ENCODE measurements at regions of chr6 and their contacts with region 1.

Region 1: DNA sequence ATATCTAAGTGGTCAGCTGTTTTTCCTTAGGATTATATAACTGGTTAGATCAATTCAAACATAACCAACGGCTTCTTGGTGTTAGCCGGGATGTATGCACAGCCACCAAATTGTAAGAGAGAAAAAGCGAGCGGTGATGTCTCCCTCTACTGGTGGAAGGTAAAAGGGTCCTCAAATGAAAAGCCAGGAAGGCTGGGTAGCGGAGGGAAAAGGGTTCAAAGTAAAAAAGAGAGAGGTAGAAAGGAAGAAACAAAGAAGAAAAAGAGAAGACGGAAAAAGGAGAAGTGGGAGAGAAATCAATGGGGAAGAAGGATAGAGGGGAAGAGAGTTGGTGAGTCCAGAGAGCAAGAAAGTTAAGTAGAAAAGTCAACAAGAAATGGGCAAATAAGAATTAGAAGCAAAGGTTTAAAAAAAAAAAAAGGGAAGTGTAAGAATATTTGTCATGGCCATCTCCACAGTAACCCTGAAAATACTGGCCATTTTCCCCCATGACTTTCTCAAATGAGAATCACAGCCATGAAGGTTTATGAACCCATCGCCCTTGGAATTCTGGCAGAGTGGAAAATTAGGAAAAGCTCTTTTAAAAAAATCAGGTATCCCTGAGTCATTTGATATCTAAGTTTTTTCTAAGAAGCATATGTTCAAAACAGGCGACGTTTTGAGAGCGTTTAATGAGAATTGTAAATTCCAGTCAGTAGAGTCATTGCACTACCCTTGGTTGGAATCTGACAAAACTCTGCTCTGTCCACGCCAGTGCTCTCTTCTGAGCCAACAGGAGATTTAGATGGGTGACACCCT is 155.6 kb upstream of the SNX9 start:
- DNase-seq: peak in 1 of 2 donors; percentile 66
- ATAC-seq: peak in 4 of 8 donors; percentile 39 to 51 (median 44)
- H3K4me3 ChIP-seq: no peak overlapping the region
- H3K27ac ChIP-seq: no peak overlapping the region
- H3K4me1 ChIP-seq: peaks cover 5 to 37% (median 21%) of the 10 kb centered on the region in 9 donors
- H3K27me3 ChIP-seq: no peaks in the 10 kb centered on the region
- CTCF ChIP-seq: peak; percentile 74 to 95 (median 88)

Region 2: DNA sequence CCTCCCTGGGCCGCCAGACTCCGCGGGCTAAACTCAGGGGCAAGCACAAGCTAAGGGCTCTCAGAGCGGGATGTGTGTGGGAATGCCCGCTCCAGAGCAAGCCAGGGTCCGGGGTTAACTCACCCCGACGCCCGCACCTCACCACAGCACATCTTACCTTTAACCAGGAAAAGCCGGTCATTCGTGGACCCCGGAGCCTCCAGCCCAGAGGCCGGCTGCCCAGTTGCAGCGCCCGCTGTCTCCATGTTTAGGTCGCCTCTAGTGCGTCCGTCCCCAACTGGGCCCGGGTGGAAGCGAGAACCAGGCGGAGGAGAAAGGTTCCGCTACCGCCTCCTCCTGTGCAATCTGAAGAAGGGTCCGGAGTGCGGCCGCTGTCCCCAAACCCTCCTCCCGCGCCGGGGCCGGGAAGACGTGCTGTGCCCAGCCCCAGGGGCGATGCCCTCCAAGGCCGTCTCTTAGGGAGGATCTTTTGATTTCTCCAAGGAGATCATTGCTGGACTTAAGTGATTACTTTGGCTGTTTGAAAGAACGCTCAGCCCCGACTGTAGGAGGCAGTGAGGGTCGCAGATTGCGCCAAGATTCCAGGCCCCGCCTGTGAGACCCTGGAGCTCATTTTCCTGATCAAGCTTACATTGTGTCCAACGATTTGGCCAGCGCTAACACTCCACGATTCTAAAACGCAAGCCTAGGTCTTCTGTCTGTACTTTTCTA is 344.0 kb before region 1 on chr6 and contains the start of gene TMEM242:
- intact Hi-C with region 1: loop called in 4 of 10 experiments (anchors 2 to 10 kb)
- DNase-seq: peak; percentile 92 to 93
- ATAC-seq: peak; percentile 94 to 98 (median 97)
- H3K4me3 ChIP-seq: peak within 1 kb of the TSS; percentile 61 to 88 (median 76)
- H3K27ac ChIP-seq: peak within 1 kb of the TSS; percentile 74 to 98 (median 95)
- H3K4me1 ChIP-seq: peaks cover 11 to 41% (median 30%) of the 10 kb centered on the region in 9 donors
- H3K27me3 ChIP-seq: no peaks in the 10 kb centered on the region
- CTCF ChIP-seq: peak; percentile 10 to 46 (median 29)
- total RNA-seq, gene TMEM242: 12.5 to 18.7 (median 16.7) TPM

Region 3: DNA sequence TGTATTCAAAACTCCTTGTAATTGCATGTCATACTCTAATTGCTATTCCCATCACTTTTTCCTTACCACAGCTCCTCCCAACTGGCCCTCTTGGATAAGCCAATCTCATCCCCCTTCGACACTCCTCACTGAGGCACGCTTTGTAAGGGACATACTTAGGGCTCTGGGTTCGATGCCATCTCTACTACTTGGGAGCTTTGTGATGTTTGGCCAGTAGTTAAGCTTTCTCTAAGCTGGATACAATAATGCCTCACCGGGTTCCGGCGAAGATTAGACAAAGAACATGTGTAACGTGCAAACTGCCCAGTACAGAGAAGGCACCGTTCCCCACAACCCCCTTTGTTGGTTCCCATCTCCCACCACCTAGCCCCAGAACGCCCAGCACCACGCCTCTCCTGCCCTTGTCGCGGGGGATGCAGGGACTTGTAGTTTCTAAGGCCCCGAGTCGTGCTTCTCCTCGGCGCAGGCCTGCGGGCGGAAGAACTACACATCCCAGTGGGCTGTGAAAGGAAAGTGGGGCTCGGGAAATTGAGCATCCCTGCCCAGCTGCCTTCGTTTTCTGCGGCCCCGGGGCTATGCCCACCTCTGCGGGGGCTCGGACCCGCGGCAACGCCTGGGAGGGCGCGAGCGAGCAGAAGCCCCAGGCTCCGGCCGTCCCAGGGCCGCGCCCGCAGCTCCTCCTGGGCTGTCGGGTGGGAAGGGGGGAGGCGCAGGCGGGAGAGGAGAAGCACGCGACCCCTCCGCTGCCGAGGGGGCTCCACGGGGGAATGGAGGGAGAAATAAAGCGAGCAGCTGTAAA is 287.6 kb before region 1 on chr6:
- intact Hi-C with region 1: loop called in 5 of 10 experiments (anchors 5 to 10 kb)
- DNase-seq: peak; percentile 87 to 94
- ATAC-seq: peak; percentile 90 to 95 (median 94)
- H3K4me3 ChIP-seq: peak overlapping the region; percentile 74 to 99 (median 95)
- H3K27ac ChIP-seq: peak overlapping the region; percentile 76 to 98 (median 96)
- H3K4me1 ChIP-seq: peaks cover 0 to 31% (median 22%) of the 10 kb centered on the region in 9 donors
- H3K27me3 ChIP-seq: no peaks in the 10 kb centered on the region
- CTCF ChIP-seq: no peak

Region 4: GRCh38 chr6:157715765-157716164 is 48.4 kb after region 1 on chr6:
- intact Hi-C with region 1: loop called in 1 of 10 experiments (anchors 5 kb)
- DNase-seq: peak; percentile 61 to 67
- ATAC-seq: peak; percentile 52 to 96 (median 84)
- H3K4me3 ChIP-seq: no peak overlapping the region
- H3K27ac ChIP-seq: peak overlapping the region in 9 of 10 donors; percentile 34 to 83 (median 55)
- H3K4me1 ChIP-seq: peaks cover 0 to 37% (median 23%) of the 10 kb centered on the region in 9 donors
- H3K27me3 ChIP-seq: no peaks in the 10 kb centered on the region
- CTCF ChIP-seq: no peak

Region 5: GRCh38 chr6:157756708-157757429 is 89.5 kb after region 1 on chr6:
- intact Hi-C with region 1: loop called in 2 of 10 experiments (anchors 5 kb)
- DNase-seq: peak; percentile 83 to 90
- ATAC-seq: peak; percentile 85 to 94 (median 90)
- H3K4me3 ChIP-seq: peak overlapping the region in 1 of 10 donors; percentile 2
- H3K27ac ChIP-seq: peak overlapping the region in 3 of 10 donors; percentile 17 to 54 (median 32)
- H3K4me1 ChIP-seq: peaks cover 0 to 46% (median 21%) of the 10 kb centered on the region in 9 donors
- H3K27me3 ChIP-seq: no peaks in the 10 kb centered on the region
- CTCF ChIP-seq: peak; percentile 66 to 90 (median 83)

Region 6: DNA sequence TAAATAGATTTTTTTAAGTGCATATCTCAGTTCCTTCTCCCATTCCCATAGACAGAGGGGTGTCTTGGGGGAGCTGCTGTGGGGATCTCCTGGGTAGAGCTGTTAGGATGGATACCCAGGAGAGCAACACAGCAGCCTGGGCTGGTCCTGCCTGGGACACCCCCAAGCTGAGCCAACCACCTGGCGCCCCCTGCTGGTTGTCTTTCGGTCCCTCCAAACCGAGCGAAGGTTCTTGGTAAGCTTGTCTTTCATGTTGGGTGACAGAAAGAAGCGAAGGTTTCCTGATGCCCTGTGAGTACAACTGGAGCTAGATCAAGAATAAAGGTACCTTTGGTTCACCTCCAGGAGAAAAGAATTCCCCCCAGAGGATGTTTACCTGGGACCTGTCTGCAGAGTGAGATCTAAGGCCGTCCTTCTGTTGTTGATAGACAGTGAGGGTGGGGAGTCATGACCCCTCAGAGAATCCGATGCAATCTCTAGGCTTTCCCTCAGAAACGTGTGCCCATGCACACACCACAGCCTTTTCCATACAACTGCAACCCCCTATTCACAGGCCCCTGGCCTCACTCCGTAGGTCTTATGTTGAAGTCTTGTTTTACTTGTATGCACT is 206.4 kb after region 1 on chr6:
- intact Hi-C with region 1: loop called in 2 of 10 experiments (anchors 10 kb)
- DNase-seq: peak; percentile 66 to 82
- ATAC-seq: peak; percentile 62 to 83 (median 72)
- H3K4me3 ChIP-seq: no peak overlapping the region
- H3K27ac ChIP-seq: no peak overlapping the region
- H3K4me1 ChIP-seq: peaks cover 0 to 6% (median 0%) of the 10 kb centered on the region in 9 donors
- H3K27me3 ChIP-seq: no peaks in the 10 kb centered on the region
- CTCF ChIP-seq: peak; percentile 64 to 87 (median 79)

Region 7: DNA sequence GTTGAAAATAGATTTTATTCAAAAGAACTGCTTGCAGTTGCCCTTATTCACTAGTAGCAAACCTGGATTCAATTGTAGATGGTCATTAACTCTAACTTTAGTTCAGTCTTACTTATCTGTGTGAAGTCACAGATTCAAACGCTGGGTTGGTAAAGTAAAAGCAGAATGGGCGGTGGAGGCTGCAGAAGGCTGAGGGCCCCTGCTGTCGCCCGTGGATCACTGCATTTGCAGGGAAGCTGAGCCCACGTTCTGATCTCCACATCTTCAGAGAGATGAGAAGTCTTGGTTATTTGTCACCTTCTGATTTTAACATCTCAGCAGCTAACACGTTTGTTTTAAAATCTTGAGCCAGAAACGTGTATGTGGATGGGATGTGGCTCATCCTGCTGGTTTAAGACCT is 230.8 kb after region 1 on chr6:
- intact Hi-C with region 1: loop called in 1 of 10 experiments (anchors 10 kb)
- DNase-seq: no peak
- ATAC-seq: peak in 6 of 8 donors; percentile 44 to 77 (median 62)
- H3K4me3 ChIP-seq: no peak overlapping the region
- H3K27ac ChIP-seq: peak overlapping the region in 1 of 10 donors; percentile 16
- H3K4me1 ChIP-seq: peaks cover 0 to 37% (median 15%) of the 10 kb centered on the region in 9 donors
- H3K27me3 ChIP-seq: no peaks in the 10 kb centered on the region
- CTCF ChIP-seq: peak in 7 of 9 donors; percentile 23 to 58 (median 41)

Measured in heart right ventricle (tissue), 16 donors.